ENCODE measurements at regions of chr4 and their contacts with region 1.

Region 1: GRCh38 chr4:77599378-77599777 is 6.2 kb upstream of the CXCL13 start:
- DNase-seq: no peak
- ATAC-seq: peak; percentile 39
- H3K4me3 ChIP-seq: no peak overlapping the region
- H3K27ac ChIP-seq: no peak overlapping the region
- H3K4me1 ChIP-seq: no peaks in the 10 kb centered on the region
- H3K27me3 ChIP-seq: peaks cover 0 to 8% of the 10 kb centered on the region in 2 donors
- CTCF ChIP-seq: peak; percentile 40 to 58

Region 2: GRCh38 chr4:77473509-77473908 is 125.9 kb before region 1 on chr4:
- intact Hi-C with region 1: loop called in 1 of 2 experiments (anchors 10 kb)
- DNase-seq: no peak
- ATAC-seq: peak; percentile 54
- H3K4me3 ChIP-seq: no peak overlapping the region
- H3K27ac ChIP-seq: no peak overlapping the region
- H3K4me1 ChIP-seq: no peaks in the 10 kb centered on the region
- H3K27me3 ChIP-seq: no peaks in the 10 kb centered on the region
- CTCF ChIP-seq: peak in 1 of 2 donors; percentile 25

Measured in left lung (tissue), 14 donors.